CD4-positive, alpha-beta T cell (primary cell): ENCODE measurements at regions of chr1 and their contacts with region 1.

Region 1: GRCh38 chr1:54488779-54489626 is 59.0 kb upstream of the ACOT11 start:
- DNase-seq: peak; percentile 38 to 83 (median 64)
- ATAC-seq: peak; percentile 57
- H3K4me3 ChIP-seq: peak overlapping the region; percentile 80
- H3K4me3 Mint-ChIP-seq: peak overlapping the region; percentile 87
- H3K27ac ChIP-seq: peak overlapping the region; percentile 58 to 78
- H3K27ac Mint-ChIP-seq: peak overlapping the region; percentile 62
- H3K4me1 ChIP-seq: peaks cover 52% of the 10 kb centered on the region
- H3K4me1 Mint-ChIP-seq: peaks cover 50% of the 10 kb centered on the region
- H3K27me3 ChIP-seq: no peaks in the 10 kb centered on the region
- H3K27me3 Mint-ChIP-seq: no peaks in the 10 kb centered on the region
- CTCF ChIP-seq: peak; percentile 99

Region 2: DNA sequence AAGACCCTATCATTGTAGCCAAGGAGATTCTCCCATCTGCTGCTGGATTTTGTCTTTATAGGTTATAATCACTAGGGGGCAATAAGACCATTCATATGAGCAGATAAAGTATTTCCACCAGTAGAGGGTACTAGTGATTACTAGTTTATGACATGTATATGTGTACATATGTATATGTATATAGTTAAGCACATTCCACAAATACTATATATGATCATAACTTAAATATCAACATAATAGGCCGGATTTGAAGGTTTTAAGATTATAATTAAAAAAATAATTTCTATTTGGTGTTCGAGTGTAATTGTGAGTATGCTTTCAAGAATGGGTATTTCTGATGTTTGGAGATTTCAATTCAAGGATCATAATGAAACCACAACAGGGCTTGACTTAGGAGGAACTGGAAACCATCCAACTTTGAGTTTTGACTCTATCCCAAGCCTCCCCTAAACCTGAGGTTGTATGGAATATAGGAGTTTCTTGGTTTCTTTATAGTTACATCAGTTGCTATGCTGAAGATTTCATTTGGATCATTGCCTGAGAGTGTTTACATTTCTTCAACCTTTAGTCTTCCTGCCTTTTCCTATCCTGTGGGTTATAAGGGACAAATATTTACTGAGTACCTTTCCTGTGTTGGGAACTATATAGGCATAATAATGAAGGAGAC is 418.7 kb before region 1 on chr1:
- CTCF ChIA-PET with region 1: interaction called, 5 read pairs
- POLR2A ChIA-PET with region 1: interaction called, 4 read pairs
- intact Hi-C with region 1: loop called (anchors 1 kb)
- DNase-seq: peak in 3 of 14 experiments; percentile 70 to 74 (median 72)
- ATAC-seq: peak; percentile 94
- H3K4me3 ChIP-seq: no peak overlapping the region
- H3K4me3 Mint-ChIP-seq: no peak overlapping the region
- H3K27ac ChIP-seq: no peak overlapping the region
- H3K27ac Mint-ChIP-seq: no peak overlapping the region
- H3K4me1 ChIP-seq: no peaks in the 10 kb centered on the region
- H3K4me1 Mint-ChIP-seq: no peaks in the 10 kb centered on the region
- H3K27me3 ChIP-seq: no peaks in the 10 kb centered on the region
- H3K27me3 Mint-ChIP-seq: no peaks in the 10 kb centered on the region
- CTCF ChIP-seq: peak; percentile 99

Region 3: GRCh38 chr1:54180701-54181360 is 308.2 kb before region 1 on chr1:
- CTCF ChIA-PET with region 1: interaction called, 9 read pairs
- POLR2A ChIA-PET with region 1: no interaction called
- intact Hi-C with region 1: loop called (anchors 1 kb)
- DNase-seq: no peak
- ATAC-seq: no peak
- H3K4me3 ChIP-seq: no peak overlapping the region
- H3K4me3 Mint-ChIP-seq: no peak overlapping the region
- H3K27ac ChIP-seq: no peak overlapping the region
- H3K27ac Mint-ChIP-seq: no peak overlapping the region
- H3K4me1 ChIP-seq: no peaks in the 10 kb centered on the region
- H3K4me1 Mint-ChIP-seq: no peaks in the 10 kb centered on the region
- H3K27me3 ChIP-seq: no peaks in the 10 kb centered on the region
- H3K27me3 Mint-ChIP-seq: no peaks in the 10 kb centered on the region
- CTCF ChIP-seq: no peak

Region 4: GRCh38 chr1:54271341-54271740 is 217.7 kb before region 1 on chr1:
- CTCF ChIA-PET with region 1: interaction called, 3 read pairs
- POLR2A ChIA-PET with region 1: interaction called, 3 read pairs
- intact Hi-C with region 1: loop called in 1 of 2 experiments (anchors 2 kb)
- DNase-seq: no peak
- ATAC-seq: no peak
- H3K4me3 ChIP-seq: no peak overlapping the region
- H3K4me3 Mint-ChIP-seq: no peak overlapping the region
- H3K27ac ChIP-seq: no peak overlapping the region
- H3K27ac Mint-ChIP-seq: no peak overlapping the region
- H3K4me1 ChIP-seq: peaks cover 17% of the 10 kb centered on the region
- H3K4me1 Mint-ChIP-seq: peaks cover 39% of the 10 kb centered on the region
- H3K27me3 ChIP-seq: no peaks in the 10 kb centered on the region
- H3K27me3 Mint-ChIP-seq: no peaks in the 10 kb centered on the region
- CTCF ChIP-seq: no peak

Region 5: GRCh38 chr1:54355931-54356679 is 132.9 kb before region 1 on chr1:
- CTCF ChIA-PET with region 1: interaction called, 9 read pairs
- POLR2A ChIA-PET with region 1: no interaction called
- intact Hi-C with region 1: loop called (anchors 2 to 5 kb)
- DNase-seq: peak in 4 of 14 experiments; percentile 7 to 46 (median 42)
- ATAC-seq: peak; percentile 8
- H3K4me3 ChIP-seq: peak overlapping the region; percentile 42
- H3K4me3 Mint-ChIP-seq: peak overlapping the region; percentile 91
- H3K27ac ChIP-seq: peak overlapping the region in 1 of 2 donors; percentile 5
- H3K27ac Mint-ChIP-seq: peak overlapping the region; percentile 94
- H3K4me1 ChIP-seq: peaks cover 57% of the 10 kb centered on the region
- H3K4me1 Mint-ChIP-seq: peaks cover 93% of the 10 kb centered on the region
- H3K27me3 ChIP-seq: no peaks in the 10 kb centered on the region
- H3K27me3 Mint-ChIP-seq: no peaks in the 10 kb centered on the region
- CTCF ChIP-seq: no peak

Region 6: GRCh38 chr1:54459726-54460191 is 29.2 kb before region 1 on chr1:
- CTCF ChIA-PET with region 1: interaction called, 7 read pairs
- POLR2A ChIA-PET with region 1: interaction called, 28 read pairs
- intact Hi-C with region 1: no loop called
- DNase-seq: peak in 3 of 14 experiments; percentile 16 to 48 (median 26)
- ATAC-seq: peak; percentile 9
- H3K4me3 ChIP-seq: no peak overlapping the region
- H3K4me3 Mint-ChIP-seq: peak overlapping the region; percentile 66
- H3K27ac ChIP-seq: peak overlapping the region; percentile 55 to 56
- H3K27ac Mint-ChIP-seq: peak overlapping the region; percentile 83
- H3K4me1 ChIP-seq: peaks cover 41% of the 10 kb centered on the region
- H3K4me1 Mint-ChIP-seq: peaks cover 45% of the 10 kb centered on the region
- H3K27me3 ChIP-seq: no peaks in the 10 kb centered on the region
- H3K27me3 Mint-ChIP-seq: no peaks in the 10 kb centered on the region
- CTCF ChIP-seq: no peak

Region 7: DNA sequence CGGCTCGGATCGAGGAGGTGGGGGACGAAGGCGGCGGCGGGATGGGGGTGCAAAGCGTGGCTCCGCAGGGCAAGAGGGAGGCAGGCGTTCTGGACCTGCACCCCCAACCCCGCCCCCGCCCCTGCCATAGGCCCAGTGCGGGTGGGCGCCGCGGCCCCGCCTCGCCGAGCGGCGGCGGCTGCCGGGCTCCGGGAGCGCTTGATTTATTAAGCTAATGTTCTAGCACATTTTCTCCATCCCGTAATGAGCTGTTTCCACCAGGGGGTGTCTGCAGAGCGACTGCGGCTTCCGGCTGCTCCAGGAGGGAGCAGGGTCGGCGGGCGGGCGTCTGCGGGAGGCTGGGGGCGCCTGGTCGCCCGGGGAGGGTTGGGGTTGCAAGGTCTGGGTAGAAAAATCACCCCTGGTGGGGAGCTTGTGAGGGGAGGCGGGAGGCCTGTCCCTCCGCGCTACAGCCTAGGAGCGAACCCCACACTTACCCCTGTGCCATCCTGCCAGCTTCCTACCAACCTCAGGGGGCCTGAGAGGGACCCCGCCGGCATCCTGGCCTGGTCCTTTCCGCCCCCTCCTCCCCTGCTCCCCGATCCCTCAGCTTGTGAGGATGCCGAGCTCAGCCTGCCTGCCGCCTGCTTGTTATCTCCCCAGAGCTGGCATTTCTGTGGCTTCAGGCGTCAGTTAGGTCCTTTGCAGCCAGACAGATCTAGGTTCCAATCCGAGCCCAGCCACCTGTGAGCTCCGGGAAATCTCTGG is 10.5 kb after region 1 on chr1:
- CTCF ChIA-PET with region 1: interaction called, 19 read pairs
- POLR2A ChIA-PET with region 1: interaction called, 3 read pairs
- intact Hi-C with region 1: no loop called
- DNase-seq: peak in 8 of 14 experiments; percentile 25 to 64 (median 48)
- ATAC-seq: peak; percentile 83
- H3K4me3 ChIP-seq: peak overlapping the region; percentile 41
- H3K4me3 Mint-ChIP-seq: peak overlapping the region; percentile 79
- H3K27ac ChIP-seq: no peak overlapping the region
- H3K27ac Mint-ChIP-seq: no peak overlapping the region
- H3K4me1 ChIP-seq: peaks cover 13% of the 10 kb centered on the region
- H3K4me1 Mint-ChIP-seq: peaks cover 13% of the 10 kb centered on the region
- H3K27me3 ChIP-seq: peaks cover 13 to 30% of the 10 kb centered on the region in 2 experiments
- H3K27me3 Mint-ChIP-seq: peaks cover 48% of the 10 kb centered on the region
- CTCF ChIP-seq: peak; percentile 49

Region 8: DNA sequence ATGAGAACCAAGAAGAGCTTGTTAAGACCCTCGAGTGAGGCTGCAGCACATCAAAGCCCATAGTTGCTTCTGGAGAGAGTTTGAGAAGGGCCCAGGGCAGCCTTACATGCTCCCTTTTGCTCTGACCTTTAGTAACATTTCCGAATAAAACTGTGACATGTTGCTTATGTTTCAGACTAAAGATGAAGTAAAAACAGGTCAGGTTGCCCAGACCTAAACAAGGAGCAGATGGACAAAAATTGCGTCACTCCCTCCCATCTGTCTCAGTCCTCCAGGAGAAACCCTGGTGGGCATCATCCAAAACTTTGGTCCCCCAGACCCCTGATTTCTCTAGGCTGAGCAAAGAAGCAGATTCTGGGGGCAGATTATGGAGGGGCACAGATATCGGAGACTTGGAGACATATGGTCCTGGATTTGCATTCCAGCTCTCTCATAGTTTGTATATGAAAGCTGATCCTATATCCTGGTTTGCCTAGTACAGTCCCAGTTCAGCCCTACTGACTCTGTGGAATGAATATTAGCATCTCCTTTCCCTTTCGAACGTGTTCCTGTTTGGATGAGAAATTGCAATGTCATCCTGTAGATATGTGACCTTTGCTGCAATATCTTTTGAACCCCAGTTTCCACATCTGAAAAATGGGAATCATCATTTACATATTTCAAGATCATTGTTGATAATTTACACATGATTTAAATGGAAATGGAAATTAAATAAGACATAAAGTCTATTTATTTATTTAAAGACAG is 1031.1 kb after region 1 on chr1:
- CTCF ChIA-PET with region 1: no interaction called
- POLR2A ChIA-PET with region 1: no interaction called
- intact Hi-C with region 1: no loop called
- DNase-seq: no peak
- ATAC-seq: no peak
- H3K4me3 ChIP-seq: no peak overlapping the region
- H3K4me3 Mint-ChIP-seq: no peak overlapping the region
- H3K27ac ChIP-seq: no peak overlapping the region
- H3K27ac Mint-ChIP-seq: no peak overlapping the region
- H3K4me1 ChIP-seq: no peaks in the 10 kb centered on the region
- H3K4me1 Mint-ChIP-seq: no peaks in the 10 kb centered on the region
- H3K27me3 ChIP-seq: peaks cover 0 to 2% of the 10 kb centered on the region in 2 experiments
- H3K27me3 Mint-ChIP-seq: peaks cover 17% of the 10 kb centered on the region
- CTCF ChIP-seq: no peak